Naive thymus-derived CD4-positive, alpha-beta T cell (primary cell): ENCODE measurements at regions of chr11 and their contacts with region 1.

Region 1: DNA sequence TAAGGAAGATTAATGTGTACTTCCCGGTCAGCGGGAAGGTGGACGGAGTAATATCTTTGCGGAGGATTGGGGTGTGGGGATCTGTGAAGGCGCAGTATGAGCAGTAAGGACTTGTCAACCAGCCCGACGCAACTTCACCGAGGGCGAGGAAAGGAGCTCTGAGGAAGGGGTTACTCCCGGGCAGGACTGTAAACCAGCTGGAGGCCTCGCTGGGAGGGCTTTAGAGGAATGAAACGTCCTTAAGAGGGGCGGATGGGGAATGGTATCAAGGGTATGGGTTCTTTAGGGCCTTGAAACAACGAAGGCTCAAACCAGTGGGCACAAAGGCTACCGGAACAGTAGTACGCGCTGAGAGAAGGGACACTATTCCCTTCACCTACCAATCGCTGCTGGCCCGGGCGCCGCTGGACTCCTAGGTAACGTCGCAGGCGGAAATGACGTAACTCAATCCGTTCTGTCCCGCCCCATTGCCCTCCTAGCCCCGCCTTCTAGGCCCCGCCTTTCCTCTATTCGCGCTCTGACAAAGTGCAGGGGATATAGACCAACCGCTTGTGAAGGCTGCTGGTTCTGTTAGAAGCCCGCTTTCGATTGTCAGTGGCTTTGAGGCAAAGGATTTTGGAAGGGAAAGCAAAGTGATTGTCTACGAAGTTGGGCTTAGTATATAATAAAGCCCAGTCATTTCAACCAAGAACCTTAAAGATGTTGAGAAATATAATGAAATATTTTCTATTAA is at the start of gene C11orf65:
- DNase-seq: peak; percentile 88 to 97 (median 94)
- ATAC-seq: peak; percentile 98
- H3K4me3 ChIP-seq: peak within 1 kb of the TSS; percentile 81
- H3K4me3 Mint-ChIP-seq: peak within 1 kb of the TSS; percentile 93 to 100 (median 98)
- H3K27ac ChIP-seq: peak within 1 kb of the TSS; percentile 93
- H3K27ac Mint-ChIP-seq: peak within 1 kb of the TSS; percentile 98 to 100 (median 100)
- H3K4me1 ChIP-seq: peaks cover 3 to 5% of the 10 kb centered on the region in 2 donors
- H3K4me1 Mint-ChIP-seq: peaks cover 0 to 27% (median 17%) of the 10 kb centered on the region in 7 donors
- H3K27me3 ChIP-seq: no peaks in the 10 kb centered on the region
- H3K27me3 Mint-ChIP-seq: no peaks in the 10 kb centered on the region
- total RNA-seq, gene C11orf65: 0.27 to 1.5 (median 0.51) TPM

Region 2: GRCh38 chr11:107858217-107859070 is 608.8 kb before region 1 on chr11 and contains the start of gene SLC35F2:
- CTCF ChIA-PET with region 1: no interaction called
- POLR2A ChIA-PET with region 1: no interaction called
- intact Hi-C with region 1: loop called in 1 of 2 experiments (anchors 1 kb)
- DNase-seq: peak; percentile 15 to 81 (median 45)
- ATAC-seq: peak; percentile 88
- H3K4me3 ChIP-seq: peak within 1 kb of the TSS; percentile 88
- H3K4me3 Mint-ChIP-seq: peak within 1 kb of the TSS; percentile 89 to 98 (median 95)
- H3K27ac ChIP-seq: peak within 1 kb of the TSS; percentile 65
- H3K27ac Mint-ChIP-seq: peak within 1 kb of the TSS; percentile 21 to 88 (median 77)
- H3K4me1 ChIP-seq: no peaks in the 10 kb centered on the region
- H3K4me1 Mint-ChIP-seq: peaks cover 5 to 33% (median 26%) of the 10 kb centered on the region in 7 donors
- H3K27me3 ChIP-seq: no peaks in the 10 kb centered on the region
- H3K27me3 Mint-ChIP-seq: peaks cover 0 to 17% (median 4%) of the 10 kb centered on the region in 5 donors
- total RNA-seq, gene SLC35F2: 3.8 to 8.9 (median 4.5) TPM

Region 3: GRCh38 chr11:108237058-108237481 is 230.2 kb before region 1 on chr11:
- CTCF ChIA-PET with region 1: no interaction called
- POLR2A ChIA-PET with region 1: no interaction called
- intact Hi-C with region 1: loop called (anchors 1 to 5 kb)
- DNase-seq: peak in 4 of 9 donors; percentile 31 to 63 (median 50)
- ATAC-seq: peak; percentile 51
- H3K4me3 ChIP-seq: peak overlapping the region; percentile 50
- H3K4me3 Mint-ChIP-seq: peak overlapping the region in 9 of 10 donors; percentile 54 to 89 (median 82)
- H3K27ac ChIP-seq: peak overlapping the region; percentile 74
- H3K27ac Mint-ChIP-seq: peak overlapping the region in 7 of 9 donors; percentile 81 to 97 (median 95)
- H3K4me1 ChIP-seq: peaks cover 75 to 94% of the 10 kb centered on the region in 2 donors
- H3K4me1 Mint-ChIP-seq: peaks cover 53 to 95% (median 79%) of the 10 kb centered on the region in 7 donors
- H3K27me3 ChIP-seq: no peaks in the 10 kb centered on the region
- H3K27me3 Mint-ChIP-seq: no peaks in the 10 kb centered on the region

Region 4: GRCh38 chr11:108340970-108341369 is 126.3 kb before region 1 on chr11:
- CTCF ChIA-PET with region 1: no interaction called
- POLR2A ChIA-PET with region 1: no interaction called
- intact Hi-C with region 1: loop called in 1 of 2 experiments (anchors 5 kb)
- DNase-seq: no peak
- ATAC-seq: no peak
- H3K4me3 ChIP-seq: no peak overlapping the region
- H3K4me3 Mint-ChIP-seq: no peak overlapping the region
- H3K27ac ChIP-seq: no peak overlapping the region
- H3K27ac Mint-ChIP-seq: peak overlapping the region in 5 of 9 donors; percentile 1 to 59 (median 22)
- H3K4me1 ChIP-seq: no peaks in the 10 kb centered on the region
- H3K4me1 Mint-ChIP-seq: peaks cover 9 to 48% (median 29%) of the 10 kb centered on the region in 7 donors
- H3K27me3 ChIP-seq: no peaks in the 10 kb centered on the region
- H3K27me3 Mint-ChIP-seq: no peaks in the 10 kb centered on the region

Region 5: GRCh38 chr11:108497317-108498045 is 30.2 kb after region 1 on chr11:
- CTCF ChIA-PET with region 1: no interaction called
- POLR2A ChIA-PET with region 1: interaction called, 4 read pairs
- intact Hi-C with region 1: loop called (anchors 1 kb)
- DNase-seq: peak in 8 of 9 donors; percentile 68 to 83 (median 76)
- ATAC-seq: peak; percentile 92
- H3K4me3 ChIP-seq: peak overlapping the region; percentile 77
- H3K4me3 Mint-ChIP-seq: peak overlapping the region; percentile 95 to 100 (median 98)
- H3K27ac ChIP-seq: peak overlapping the region; percentile 87
- H3K27ac Mint-ChIP-seq: peak overlapping the region; percentile 95 to 100 (median 99)
- H3K4me1 ChIP-seq: peaks cover 0 to 3% of the 10 kb centered on the region in 2 donors
- H3K4me1 Mint-ChIP-seq: peaks cover 8 to 33% (median 24%) of the 10 kb centered on the region in 7 donors
- H3K27me3 ChIP-seq: no peaks in the 10 kb centered on the region
- H3K27me3 Mint-ChIP-seq: no peaks in the 10 kb centered on the region

Region 6: GRCh38 chr11:108664730-108665525 is 197.7 kb after region 1 on chr11 and contains the start of gene DDX10:
- CTCF ChIA-PET with region 1: no interaction called
- POLR2A ChIA-PET with region 1: interaction called, 7 read pairs
- intact Hi-C with region 1: loop called (anchors 1 kb)
- DNase-seq: peak; percentile 95 to 99 (median 98)
- ATAC-seq: peak; percentile 99
- H3K4me3 ChIP-seq: peak within 1 kb of the TSS; percentile 80
- H3K4me3 Mint-ChIP-seq: peak within 1 kb of the TSS; percentile 91 to 100 (median 100)
- H3K27ac ChIP-seq: peak within 1 kb of the TSS; percentile 77
- H3K27ac Mint-ChIP-seq: peak within 1 kb of the TSS; percentile 79 to 100 (median 97)
- H3K4me1 ChIP-seq: peaks cover 18 to 22% of the 10 kb centered on the region in 2 donors
- H3K4me1 Mint-ChIP-seq: peaks cover 24 to 56% (median 47%) of the 10 kb centered on the region in 7 donors
- H3K27me3 ChIP-seq: no peaks in the 10 kb centered on the region
- H3K27me3 Mint-ChIP-seq: peaks cover 0 to 9% (median 0%) of the 10 kb centered on the region in 5 donors
- total RNA-seq, gene DDX10: 16.7 to 34.6 (median 22.8) TPM